Transverse colon (tissue), 4 donors: ENCODE measurements at regions of chr4 and their contacts with region 1.

Region 1: DNA sequence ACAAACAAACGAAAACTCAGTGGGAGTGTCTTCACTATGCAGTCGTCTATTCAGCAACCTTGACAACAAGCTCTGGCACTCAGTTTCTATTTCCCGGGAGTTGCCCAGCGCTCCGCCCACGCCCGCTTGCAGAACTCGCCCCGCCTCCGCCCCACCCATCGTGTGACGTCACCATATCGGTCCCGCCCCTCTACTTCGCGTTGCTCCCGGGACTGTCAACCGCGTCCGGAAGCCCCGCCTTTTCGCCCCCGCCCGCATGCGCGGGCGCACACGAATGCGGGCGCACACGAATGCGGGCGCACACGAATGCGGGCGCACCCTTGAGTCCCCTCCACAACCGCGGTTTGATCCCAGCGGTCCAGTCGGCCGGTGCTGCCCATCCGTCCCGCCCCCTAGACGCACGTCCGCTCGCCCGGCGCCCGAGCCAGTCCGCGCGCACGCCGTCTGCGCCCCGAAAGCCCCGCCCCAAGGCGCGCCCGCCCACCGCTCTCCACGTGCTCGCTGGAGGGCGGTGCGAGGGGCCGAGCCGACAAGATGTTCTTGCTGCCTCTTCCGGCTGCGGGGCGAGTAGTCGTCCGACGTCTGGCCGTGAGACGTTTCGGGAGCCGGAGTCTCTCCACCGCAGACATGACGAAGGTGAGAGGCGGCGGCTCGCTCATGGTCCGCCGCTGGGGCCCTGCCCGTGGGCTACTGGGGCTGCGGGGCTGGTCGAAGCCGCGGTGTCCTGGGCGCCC is at the start of gene LAP3:
- DNase-seq: peak; percentile 99
- H3K4me3 ChIP-seq: peak within 1 kb of the TSS; percentile 69 to 87 (median 82)
- H3K27ac ChIP-seq: peak within 1 kb of the TSS; percentile 92 to 98 (median 97)
- H3K4me1 ChIP-seq: peaks cover 0 to 36% (median 20%) of the 10 kb centered on the region in 4 donors
- H3K27me3 ChIP-seq: no peaks in the 10 kb centered on the region
- CTCF ChIP-seq: peak in 1 of 5 experiments; percentile 21
- EP300 ChIP-seq: no peak
- POLR2A ChIP-seq: peak; percentile 98
- total RNA-seq, gene LAP3: 53.5 to 85.0 (median 56.0) TPM

Region 2: GRCh38 chr4:17614416-17615299 is 37.6 kb after region 1 on chr4 and contains the start of gene MED28:
- in situ Hi-C with region 1: loop called in 1 of 4 experiments (anchors 5 kb)
- intact Hi-C with region 1: loop called (anchors 1 kb)
- DNase-seq: peak; percentile 97
- H3K4me3 ChIP-seq: peak within 1 kb of the TSS; percentile 54 to 94 (median 71)
- H3K27ac ChIP-seq: peak within 1 kb of the TSS; percentile 76 to 95 (median 90)
- H3K4me1 ChIP-seq: peaks cover 17 to 48% (median 22%) of the 10 kb centered on the region in 4 donors
- H3K27me3 ChIP-seq: no peaks in the 10 kb centered on the region
- CTCF ChIP-seq: peak in 3 of 5 experiments; percentile 20 to 55 (median 50)
- EP300 ChIP-seq: no peak
- POLR2A ChIP-seq: peak; percentile 92
- total RNA-seq, gene MED28: 11.1 to 25.5 (median 19.4) TPM

Region 3: DNA sequence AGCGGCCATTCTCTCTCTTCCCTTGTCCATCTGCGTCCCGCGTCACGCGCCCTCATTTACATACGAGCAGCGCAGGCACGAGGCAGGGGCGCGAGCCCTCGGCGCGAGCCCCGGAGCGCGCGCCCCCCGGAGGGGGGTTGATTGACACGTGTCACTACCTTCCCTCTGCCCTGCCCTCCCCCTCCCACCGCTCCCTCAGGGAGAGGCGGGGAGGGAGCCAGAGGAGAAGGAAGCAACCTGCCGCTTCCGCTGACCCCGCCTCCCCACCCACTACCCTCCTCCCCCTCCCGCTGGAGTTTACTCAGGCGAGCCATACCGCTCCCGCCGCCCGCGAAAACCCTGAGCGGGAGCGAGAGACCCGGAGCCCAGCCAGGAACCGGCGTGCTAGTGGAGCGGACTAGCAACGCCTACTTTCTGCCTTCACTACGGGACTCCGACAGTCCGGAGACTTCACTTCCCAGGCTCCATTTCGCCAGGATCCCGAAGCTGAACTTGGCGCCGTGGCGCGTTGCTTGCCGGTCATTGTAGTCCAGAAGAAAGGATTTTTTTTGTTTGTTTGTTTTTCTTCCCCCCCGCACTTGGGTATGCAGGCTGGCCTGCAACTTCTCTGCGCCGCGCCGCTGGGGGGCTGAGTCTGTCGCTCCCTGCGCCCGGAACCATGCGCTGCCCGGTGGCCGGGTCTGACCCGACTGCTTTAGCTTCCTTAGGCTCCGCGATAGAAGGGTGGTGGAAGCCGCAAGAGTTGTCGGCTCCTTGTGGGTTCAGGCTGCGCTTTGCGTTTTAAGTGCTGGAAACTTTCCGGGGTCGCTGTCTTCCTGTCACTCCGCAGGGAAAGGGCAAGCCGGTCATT is 444.8 kb after region 1 on chr4 and contains the start of gene LCORL:
- in situ Hi-C with region 1: loop called in 3 of 4 experiments (anchors 25 kb)
- intact Hi-C with region 1: no loop called
- DNase-seq: peak; percentile 93
- H3K4me3 ChIP-seq: peak within 1 kb of the TSS; percentile 83 to 92 (median 87)
- H3K27ac ChIP-seq: peak within 1 kb of the TSS; percentile 94 to 98 (median 96)
- H3K4me1 ChIP-seq: peaks cover 8 to 21% (median 10%) of the 10 kb centered on the region in 4 donors
- H3K27me3 ChIP-seq: no peaks in the 10 kb centered on the region
- CTCF ChIP-seq: peak in 4 of 5 experiments; percentile 3 to 41 (median 18)
- EP300 ChIP-seq: no peak
- POLR2A ChIP-seq: no peak
- total RNA-seq, gene LCORL: 14.7 to 162 (median 28.5) TPM